ENCODE measurements at regions of chr22 and their contacts with region 1.

Region 1: DNA sequence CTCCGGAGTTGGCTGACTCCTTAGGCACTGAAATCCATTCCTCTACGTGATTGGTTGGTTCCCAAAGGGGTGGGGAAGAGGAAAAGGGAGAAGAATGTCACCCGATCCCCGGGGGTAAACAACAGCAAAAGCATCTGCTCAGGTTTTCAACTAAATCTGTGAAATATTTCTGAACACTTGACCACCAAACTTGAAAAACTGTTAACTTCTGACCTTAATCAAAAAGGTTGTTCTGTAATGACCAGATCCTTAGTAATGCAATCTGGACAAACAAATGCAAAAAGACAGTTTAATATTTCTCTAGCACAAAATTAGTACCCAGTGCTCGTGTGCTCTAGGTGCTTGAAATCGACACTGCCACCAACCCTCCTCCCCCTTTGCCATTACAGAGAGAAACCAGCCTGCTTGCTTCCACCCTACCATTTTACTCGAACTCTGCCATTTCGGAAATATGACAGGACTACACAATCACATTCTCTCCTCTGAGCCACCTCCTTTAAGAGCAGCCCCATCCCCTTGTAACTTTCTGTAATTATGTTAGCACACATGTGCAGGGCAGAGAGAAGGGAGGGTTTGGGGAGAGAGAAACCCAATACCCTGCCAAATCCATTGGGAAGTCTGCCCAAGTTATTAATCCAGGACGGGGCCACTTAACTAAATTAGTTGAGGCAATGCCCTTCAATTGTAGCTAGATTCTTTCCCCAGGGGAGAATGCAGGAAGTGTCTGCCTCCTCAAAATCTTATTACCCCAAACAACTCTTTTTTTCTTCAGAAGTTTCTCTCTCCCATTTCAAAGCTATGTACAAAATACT is 113.8 kb downstream of the RBFOX2 start:
- DNase-seq: no peak
- H3K4me3 ChIP-seq: peak overlapping the region; percentile 40 to 63 (median 57)
- H3K27ac ChIP-seq: peak overlapping the region; percentile 75 to 82 (median 80)
- H3K4me1 ChIP-seq: peaks cover 72 to 99% (median 96%) of the 10 kb centered on the region in 4 donors
- H3K27me3 ChIP-seq: no peaks in the 10 kb centered on the region
- CTCF ChIP-seq: no peak
- EP300 ChIP-seq: no peak
- POLR2A ChIP-seq: no peak

Region 2: GRCh38 chr22:35749808-35750207 is 165.1 kb before region 1 on chr22:
- intact Hi-C with region 1: loop called (anchors 10 kb)
- DNase-seq: no peak
- H3K4me3 ChIP-seq: no peak overlapping the region
- H3K27ac ChIP-seq: no peak overlapping the region
- H3K4me1 ChIP-seq: peaks cover 19 to 45% (median 34%) of the 10 kb centered on the region in 4 donors
- H3K27me3 ChIP-seq: no peaks in the 10 kb centered on the region
- CTCF ChIP-seq: no peak
- EP300 ChIP-seq: no peak
- POLR2A ChIP-seq: no peak